K562 (cell line): ENCODE measurements at regions of chr7 and their contacts with region 1.

Region 1: GRCh38 chr7:18177815-18178660 is 150.4 kb upstream of the PRPS1L1 start:
- DNase-seq: peak; percentile 53 to 88 (median 72)
- ATAC-seq: peak; percentile 79
- H3K4me3 ChIP-seq: no peak overlapping the region
- H3K27ac ChIP-seq: peak overlapping the region; percentile 88
- H3K4me1 ChIP-seq: peaks cover 13 to 49% of the 10 kb centered on the region in 2 experiments
- H3K27me3 ChIP-seq: no peaks in the 10 kb centered on the region
- CTCF ChIP-seq: no peak
- EP300 ChIP-seq: peak; percentile 87
- POLR2A ChIP-seq: peak; percentile 67
- RAD21 ChIP-seq: peak in 1 of 2 experiments; percentile 21; a peak in 1 of 4 replicates

Region 2: GRCh38 chr7:17408245-17408903 is 769.7 kb before region 1 on chr7:
- CTCF ChIA-PET with region 1: no interaction called
- POLR2A ChIA-PET with region 1: no interaction called
- in situ Hi-C with region 1: no loop called
- intact Hi-C with region 1: no loop called
- DNase-seq: peak in 1 of 4 experiments; percentile 33
- ATAC-seq: 0 out of 3 replicates have a peak, but pooled peaks have one; percentile 25
- H3K4me3 ChIP-seq: no peak overlapping the region
- H3K27ac ChIP-seq: no peak overlapping the region
- H3K4me1 ChIP-seq: no peaks in the 10 kb centered on the region
- H3K27me3 ChIP-seq: no peaks in the 10 kb centered on the region
- CTCF ChIP-seq: no peak
- EP300 ChIP-seq: no peak
- POLR2A ChIP-seq: no peak
- RAD21 ChIP-seq: no peak

Region 3: GRCh38 chr7:18125476-18125875 is 52.6 kb before region 1 on chr7:
- CTCF ChIA-PET with region 1: no interaction called
- POLR2A ChIA-PET with region 1: no interaction called
- in situ Hi-C with region 1: no loop called
- intact Hi-C with region 1: loop called (anchors 5 kb)
- DNase-seq: no peak
- ATAC-seq: no peak
- H3K4me3 ChIP-seq: no peak overlapping the region
- H3K27ac ChIP-seq: no peak overlapping the region
- H3K4me1 ChIP-seq: no peaks in the 10 kb centered on the region; a peak in 1 of 5 replicates
- H3K27me3 ChIP-seq: no peaks in the 10 kb centered on the region
- CTCF ChIP-seq: no peak
- EP300 ChIP-seq: no peak
- POLR2A ChIP-seq: no peak
- RAD21 ChIP-seq: no peak

Region 4: GRCh38 chr7:18144166-18144565 is 33.9 kb before region 1 on chr7:
- CTCF ChIA-PET with region 1: no interaction called
- POLR2A ChIA-PET with region 1: no interaction called
- in situ Hi-C with region 1: no loop called
- intact Hi-C with region 1: no loop called
- DNase-seq: no peak
- ATAC-seq: peak; percentile 66
- H3K4me3 ChIP-seq: no peak overlapping the region
- H3K27ac ChIP-seq: no peak overlapping the region
- H3K4me1 ChIP-seq: no peaks in the 10 kb centered on the region
- H3K27me3 ChIP-seq: no peaks in the 10 kb centered on the region
- CTCF ChIP-seq: no peak
- EP300 ChIP-seq: no peak
- POLR2A ChIP-seq: no peak
- RAD21 ChIP-seq: no peak

Region 5: GRCh38 chr7:18212758-18213157 is 34.7 kb after region 1 on chr7:
- CTCF ChIA-PET with region 1: no interaction called
- POLR2A ChIA-PET with region 1: interaction called, 5 read pairs
- in situ Hi-C with region 1: no loop called
- intact Hi-C with region 1: loop called (anchors 5 kb)
- DNase-seq: no peak
- ATAC-seq: no peak
- H3K4me3 ChIP-seq: no peak overlapping the region
- H3K27ac ChIP-seq: no peak overlapping the region
- H3K4me1 ChIP-seq: no peaks in the 10 kb centered on the region; a peak in 1 of 5 replicates
- H3K27me3 ChIP-seq: no peaks in the 10 kb centered on the region
- CTCF ChIP-seq: no peak
- EP300 ChIP-seq: no peak
- POLR2A ChIP-seq: no peak
- RAD21 ChIP-seq: no peak

Region 6: GRCh38 chr7:18290223-18290622 is 112.2 kb after region 1 on chr7:
- CTCF ChIA-PET with region 1: no interaction called
- POLR2A ChIA-PET with region 1: no interaction called
- in situ Hi-C with region 1: no loop called
- intact Hi-C with region 1: loop called (anchors 5 kb)
- DNase-seq: no peak
- ATAC-seq: no peak
- H3K4me3 ChIP-seq: no peak overlapping the region
- H3K27ac ChIP-seq: no peak overlapping the region
- H3K4me1 ChIP-seq: peaks cover 0 to 5% of the 10 kb centered on the region in 2 experiments; a peak in 2 of 5 replicates
- H3K27me3 ChIP-seq: no peaks in the 10 kb centered on the region
- CTCF ChIP-seq: no peak
- EP300 ChIP-seq: no peak
- POLR2A ChIP-seq: no peak
- RAD21 ChIP-seq: no peak

Region 7: DNA sequence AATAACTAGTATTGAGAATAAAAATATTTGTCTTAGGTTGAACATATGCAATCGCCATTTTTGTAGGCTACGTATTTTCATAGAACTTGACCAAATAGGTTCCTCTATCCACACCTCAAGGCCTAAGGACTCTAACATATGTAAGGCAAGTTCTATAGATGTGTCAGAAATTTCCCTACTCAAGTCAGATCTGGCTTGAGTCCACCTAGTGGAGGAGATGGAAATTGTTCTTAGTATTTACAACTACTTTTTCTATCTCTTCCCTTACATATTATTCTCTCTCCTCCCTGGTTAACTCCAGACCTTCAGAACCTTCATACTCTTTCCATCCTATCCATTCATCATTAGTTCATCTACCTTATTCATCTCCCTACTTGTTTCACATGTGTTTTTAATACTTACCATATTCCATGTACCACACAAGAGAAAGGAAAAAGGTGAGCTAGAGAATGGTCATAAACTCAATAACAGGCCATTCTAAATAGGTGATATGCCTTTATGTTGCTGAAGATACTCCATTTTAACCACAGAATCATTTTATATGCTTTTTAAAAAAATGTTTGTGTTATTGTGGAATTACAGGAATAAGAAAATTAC is 143.0 kb after region 1 on chr7:
- CTCF ChIA-PET with region 1: no interaction called
- POLR2A ChIA-PET with region 1: no interaction called
- in situ Hi-C with region 1: no loop called
- intact Hi-C with region 1: loop called (anchors 5 kb)
- DNase-seq: peak; percentile 22 to 53 (median 32)
- ATAC-seq: peak; percentile 89
- H3K4me3 ChIP-seq: no peak overlapping the region
- H3K27ac ChIP-seq: no peak overlapping the region
- H3K4me1 ChIP-seq: peaks cover 0 to 8% of the 10 kb centered on the region in 2 experiments; a peak in 1 of 5 replicates
- H3K27me3 ChIP-seq: no peaks in the 10 kb centered on the region
- CTCF ChIP-seq: peak; percentile 20 to 61 (median 45); a peak in 4 of 6 replicates
- EP300 ChIP-seq: no peak
- POLR2A ChIP-seq: no peak
- RAD21 ChIP-seq: peak; percentile 45 to 69